Activated T-helper 2 cell treated with anti-CD3 and anti-CD28 coated beads, Interferon-gamma antibody, Interleukin-2, Interleukin-4, amounts not matched to agents 10 μg/mL and 5 μg/mL and 100 μg/mL, durations not matched to agents 14 hours and 24 hours and 36 hours (primary cell): ENCODE measurements at regions of chr1 and their contacts with region 1.

Region 1: DNA sequence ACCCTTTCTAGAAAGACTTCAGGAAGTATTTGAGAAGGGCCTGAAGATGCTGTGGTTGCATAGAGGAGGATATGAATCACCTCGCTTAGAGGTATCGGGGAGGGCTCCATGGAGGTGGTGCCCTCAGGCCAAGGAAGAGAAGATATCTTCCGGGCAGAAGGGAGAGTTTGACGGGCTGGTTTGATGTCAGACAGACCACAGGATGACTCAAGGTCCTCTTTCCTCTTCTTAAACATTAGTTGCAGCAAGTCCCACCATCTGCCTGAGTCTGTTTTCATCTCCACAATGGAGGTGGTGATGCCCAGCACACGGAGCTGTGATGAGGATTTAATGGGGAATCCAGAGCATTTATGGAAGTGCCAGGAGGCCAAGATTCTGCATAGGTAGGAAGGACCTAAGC is 25.1 kb upstream of the RUNX3 start:
- DNase-seq: peak; percentile 79
- H3K4me3 Mint-ChIP-seq: peak overlapping the region; percentile 78
- H3K27ac Mint-ChIP-seq: peak overlapping the region; percentile 95
- H3K4me1 Mint-ChIP-seq: peaks cover 80% of the 10 kb centered on the region
- H3K27me3 Mint-ChIP-seq: no peaks in the 10 kb centered on the region

Region 2: DNA sequence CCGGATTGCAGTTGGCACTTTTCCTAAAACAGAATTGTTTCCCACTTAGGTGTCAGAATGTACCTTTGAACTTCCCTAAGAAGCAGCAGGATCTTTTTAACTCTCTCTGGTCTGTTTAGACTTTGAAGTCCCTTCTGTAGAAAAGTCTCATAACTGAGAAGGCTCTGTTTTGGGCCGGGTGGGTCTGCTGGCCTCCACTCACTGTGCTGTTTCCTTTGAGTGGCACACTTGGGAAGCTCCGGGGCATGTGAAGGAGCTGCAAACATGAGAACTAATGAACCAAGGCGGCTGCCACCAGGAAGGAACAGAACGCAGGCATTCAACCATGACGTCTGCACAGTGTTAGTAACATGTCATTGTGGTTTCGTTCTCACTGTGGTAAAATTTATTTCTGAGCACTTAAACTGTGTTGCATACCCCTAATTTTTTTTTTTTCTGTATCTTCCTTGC is 418.7 kb before region 1 on chr1:
- intact Hi-C with region 1: no loop called
- DNase-seq: peak; percentile 43
- H3K4me3 Mint-ChIP-seq: peak overlapping the region; percentile 76
- H3K27ac Mint-ChIP-seq: peak overlapping the region; percentile 98
- H3K4me1 Mint-ChIP-seq: peaks cover 64% of the 10 kb centered on the region
- H3K27me3 Mint-ChIP-seq: no peaks in the 10 kb centered on the region

Region 3: GRCh38 chr1:24930204-24931145 is 24.7 kb before region 1 on chr1 and contains the start of gene RUNX3:
- intact Hi-C with region 1: loop called (anchors 1 kb)
- DNase-seq: peak; percentile 88
- H3K4me3 Mint-ChIP-seq: peak within 1 kb of the TSS; percentile 93
- H3K27ac Mint-ChIP-seq: peak within 1 kb of the TSS; percentile 67
- H3K4me1 Mint-ChIP-seq: peaks cover 61% of the 10 kb centered on the region
- H3K27me3 Mint-ChIP-seq: no peaks in the 10 kb centered on the region
- total RNA-seq, gene RUNX3: 129 and 135 TPM in 2 replicates

Region 4: DNA sequence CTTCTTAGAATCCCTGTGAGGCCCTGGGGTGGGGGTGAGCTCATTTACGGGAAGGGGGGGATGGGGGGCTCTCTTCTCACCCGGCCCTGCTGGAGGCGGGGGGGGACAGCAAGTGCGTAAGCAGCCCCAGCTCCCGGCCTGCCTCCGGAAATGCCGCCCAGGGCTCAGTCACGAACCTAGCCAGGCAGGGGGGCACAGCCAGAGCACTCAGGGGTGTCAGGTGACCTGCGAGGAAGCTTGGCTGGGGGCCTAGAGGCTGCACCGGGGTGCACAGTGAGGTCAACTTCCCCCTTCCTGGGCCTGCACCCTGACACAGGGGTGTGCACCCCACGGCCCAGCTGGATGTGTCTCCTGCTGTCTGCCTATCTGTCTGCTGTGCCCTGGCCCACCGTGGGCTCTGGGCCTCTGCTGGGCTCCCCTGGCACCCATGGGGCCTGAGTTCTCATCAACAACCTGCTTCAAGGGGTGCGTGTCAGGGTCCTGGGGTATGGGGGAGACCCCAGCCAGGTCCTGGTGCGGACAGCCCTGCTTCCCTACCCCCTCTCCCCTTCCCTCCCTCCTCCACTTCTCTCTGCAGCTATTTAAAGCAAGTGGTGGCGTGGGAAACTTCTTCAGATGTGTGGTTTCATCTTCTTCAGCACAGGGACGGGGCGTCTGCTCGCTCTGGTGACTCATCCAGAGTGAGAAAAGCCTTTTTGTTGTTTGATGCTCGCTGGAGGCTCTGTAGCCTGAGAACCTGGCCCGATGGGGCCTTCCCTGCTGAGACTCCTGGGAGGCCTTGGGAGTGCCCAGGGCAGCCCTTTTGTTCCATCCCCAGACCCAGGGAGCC is 67.4 kb after region 1 on chr1:
- intact Hi-C with region 1: loop called (anchors 1 kb)
- DNase-seq: peak; percentile 91
- H3K4me3 Mint-ChIP-seq: peak overlapping the region; percentile 76
- H3K27ac Mint-ChIP-seq: peak overlapping the region; percentile 96
- H3K4me1 Mint-ChIP-seq: peaks cover 87% of the 10 kb centered on the region
- H3K27me3 Mint-ChIP-seq: no peaks in the 10 kb centered on the region

Region 5: GRCh38 chr1:25031966-25032667 is 77.0 kb after region 1 on chr1:
- intact Hi-C with region 1: loop called (anchors 1 kb)
- DNase-seq: no peak
- H3K4me3 Mint-ChIP-seq: peak overlapping the region; percentile 74
- H3K27ac Mint-ChIP-seq: peak overlapping the region; percentile 92
- H3K4me1 Mint-ChIP-seq: peaks cover 73% of the 10 kb centered on the region
- H3K27me3 Mint-ChIP-seq: no peaks in the 10 kb centered on the region

Region 6: DNA sequence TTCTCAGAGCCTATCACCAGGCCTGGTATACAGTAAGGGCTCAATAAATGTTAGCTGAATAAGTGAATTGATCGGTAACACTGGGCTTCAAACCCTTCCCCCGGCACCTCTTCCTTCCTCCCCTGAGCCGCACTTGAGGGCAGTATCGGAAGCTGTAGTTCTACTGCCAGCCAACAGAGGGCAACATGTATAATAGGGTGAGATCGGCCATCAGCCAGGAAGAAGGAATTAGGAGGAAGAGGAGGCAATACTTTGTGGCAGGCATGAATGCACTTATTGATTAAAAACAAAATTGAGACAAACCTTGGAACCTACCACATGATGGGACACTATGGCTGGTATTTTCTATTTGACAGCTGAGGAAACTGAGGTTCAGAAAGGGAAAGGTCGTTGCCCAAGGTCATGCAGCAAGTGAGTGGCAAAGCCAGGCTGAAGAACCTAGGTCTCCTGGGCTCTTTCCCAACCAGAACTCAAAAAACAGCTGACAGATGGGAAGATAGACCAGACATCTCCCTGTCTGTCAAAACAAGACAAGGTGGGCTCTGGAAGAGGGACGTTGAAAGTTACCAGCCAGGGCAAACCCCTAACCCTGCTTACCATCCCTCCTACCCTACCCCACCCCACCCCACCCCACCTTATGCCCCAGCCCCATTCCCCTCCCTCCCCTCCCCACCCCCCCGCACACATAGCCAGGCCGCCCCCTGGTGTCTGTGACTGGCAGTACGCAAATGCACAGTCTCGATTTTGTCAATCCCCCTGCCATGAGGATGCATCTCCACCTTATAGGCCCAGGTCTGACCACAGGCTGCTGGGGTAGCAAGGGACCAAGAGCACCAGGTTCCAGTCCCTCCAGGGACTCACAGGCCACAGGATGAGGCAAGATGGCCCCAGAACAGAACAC is 82.3 kb after region 1 on chr1:
- intact Hi-C with region 1: loop called (anchors 1 kb)
- DNase-seq: peak; percentile 43
- H3K4me3 Mint-ChIP-seq: no peak overlapping the region
- H3K27ac Mint-ChIP-seq: peak overlapping the region; percentile 0
- H3K4me1 Mint-ChIP-seq: peaks cover 36% of the 10 kb centered on the region
- H3K27me3 Mint-ChIP-seq: peaks cover 10% of the 10 kb centered on the region

Region 7: GRCh38 chr1:25099343-25099951 is 144.3 kb after region 1 on chr1:
- intact Hi-C with region 1: loop called (anchors 2 kb)
- DNase-seq: peak; percentile 36
- H3K4me3 Mint-ChIP-seq: peak overlapping the region; percentile 68
- H3K27ac Mint-ChIP-seq: peak overlapping the region; percentile 67
- H3K4me1 Mint-ChIP-seq: peaks cover 66% of the 10 kb centered on the region
- H3K27me3 Mint-ChIP-seq: peaks cover 5% of the 10 kb centered on the region

Region 8: GRCh38 chr1:25239681-25240541 is 284.8 kb after region 1 on chr1:
- intact Hi-C with region 1: loop called (anchors 10 kb)
- DNase-seq: peak; percentile 88
- H3K4me3 Mint-ChIP-seq: peak overlapping the region; percentile 83
- H3K27ac Mint-ChIP-seq: peak overlapping the region; percentile 95
- H3K4me1 Mint-ChIP-seq: peaks cover 38% of the 10 kb centered on the region
- H3K27me3 Mint-ChIP-seq: no peaks in the 10 kb centered on the region